WTC11 (cell line): ENCODE measurements at regions of chr12 and their contacts with region 1.

Region 1: GRCh38 chr12:59820594-59821011 is 224.8 kb downstream of the SLC16A7 start:
- DNase-seq: no peak
- ATAC-seq: no peak
- H3K4me3 Mint-ChIP-seq: no peak overlapping the region
- H3K27ac Mint-ChIP-seq: no peak overlapping the region
- H3K4me1 Mint-ChIP-seq: no peaks in the 10 kb centered on the region
- H3K27me3 Mint-ChIP-seq: no peaks in the 10 kb centered on the region
- CTCF ChIP-seq: no peak

Region 2: GRCh38 chr12:59744564-59744963 is 76.0 kb before region 1 on chr12:
- CTCF ChIA-PET with region 1: no interaction called
- POLR2A ChIA-PET with region 1: no interaction called
- DNase-seq: no peak
- ATAC-seq: no peak; the same call in 1 of the 2 replicates
- H3K4me3 Mint-ChIP-seq: no peak overlapping the region
- H3K27ac Mint-ChIP-seq: no peak overlapping the region
- H3K4me1 Mint-ChIP-seq: peaks cover 5% of the 10 kb centered on the region
- H3K27me3 Mint-ChIP-seq: no peaks in the 10 kb centered on the region
- CTCF ChIP-seq: no peak

Region 3: DNA sequence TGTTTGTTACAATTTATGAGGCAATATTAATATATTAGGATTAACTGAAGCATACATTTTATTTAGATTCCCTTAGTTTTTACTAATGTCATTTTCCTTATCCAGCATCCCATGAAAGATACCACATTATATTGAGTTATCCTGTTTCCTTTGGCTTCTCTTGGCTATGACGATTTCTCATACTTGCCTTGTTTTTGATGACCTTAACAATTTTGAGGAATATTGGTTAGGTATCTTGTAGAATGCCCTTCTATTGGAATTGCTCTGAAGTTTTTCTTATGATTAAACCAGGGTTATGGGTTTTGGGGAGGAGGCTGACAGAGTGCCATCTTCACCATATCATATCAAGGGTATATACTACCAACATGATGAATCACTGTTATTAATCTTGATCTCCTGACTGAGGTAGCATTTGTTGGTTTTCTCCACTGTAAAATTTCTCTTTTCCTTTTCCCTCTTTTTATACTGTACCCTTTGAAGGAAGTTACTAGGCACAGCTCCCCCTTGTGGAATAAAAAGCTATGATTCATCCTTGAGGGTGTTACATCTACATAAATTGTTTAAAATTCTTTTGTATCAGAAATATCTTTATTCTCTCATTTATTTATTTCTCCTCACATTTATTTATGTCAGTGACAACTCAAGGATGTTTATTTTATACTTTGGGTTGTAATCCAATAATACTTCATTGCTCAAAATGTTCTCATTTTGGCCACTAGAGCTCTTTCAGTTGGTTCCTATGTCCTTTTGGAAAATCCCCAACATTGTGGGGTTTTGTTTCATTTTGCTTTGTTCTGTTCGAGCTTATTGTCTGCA is 14.3 kb after region 1 on chr12:
- CTCF ChIA-PET with region 1: interaction called, 10 read pairs
- POLR2A ChIA-PET with region 1: no interaction called
- DNase-seq: no peak
- ATAC-seq: peak; percentile 65
- H3K4me3 Mint-ChIP-seq: no peak overlapping the region
- H3K27ac Mint-ChIP-seq: no peak overlapping the region
- H3K4me1 Mint-ChIP-seq: peaks cover 12% of the 10 kb centered on the region
- H3K27me3 Mint-ChIP-seq: no peaks in the 10 kb centered on the region
- CTCF ChIP-seq: peak; percentile 61

Region 4: GRCh38 chr12:59858508-59859170 is 38.0 kb after region 1 on chr12:
- CTCF ChIA-PET with region 1: no interaction called
- POLR2A ChIA-PET with region 1: no interaction called
- DNase-seq: no peak
- ATAC-seq: no peak
- H3K4me3 Mint-ChIP-seq: no peak overlapping the region
- H3K27ac Mint-ChIP-seq: no peak overlapping the region
- H3K4me1 Mint-ChIP-seq: no peaks in the 10 kb centered on the region
- H3K27me3 Mint-ChIP-seq: no peaks in the 10 kb centered on the region
- CTCF ChIP-seq: no peak